ENCODE measurements at regions of chr1 and their contacts with region 1.

Region 1: DNA sequence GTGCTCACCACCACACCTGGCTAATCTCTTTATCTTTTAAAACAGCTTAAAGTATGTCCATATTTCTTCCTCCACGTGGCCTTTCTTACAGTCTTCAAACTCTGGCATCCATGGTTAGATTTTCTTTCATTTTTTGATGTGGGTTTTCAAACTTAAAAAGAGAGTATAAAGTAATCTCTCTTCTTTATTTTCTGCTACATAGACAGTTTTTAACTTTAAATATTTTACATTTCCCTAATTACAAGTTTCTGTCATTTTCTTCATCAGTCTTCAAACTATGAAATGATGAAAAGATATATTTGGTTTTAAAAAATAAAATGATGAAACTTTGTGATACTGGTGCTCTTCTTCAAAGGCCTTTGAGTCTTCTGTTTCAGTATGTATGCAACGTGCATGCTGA is 143.5 kb upstream of the ESRRG start:
- DNase-seq: no peak
- ATAC-seq: no peak
- H3K4me3 ChIP-seq: no peak overlapping the region
- H3K27ac ChIP-seq: no peak overlapping the region
- H3K4me1 ChIP-seq: no peaks in the 10 kb centered on the region
- H3K27me3 ChIP-seq: no peaks in the 10 kb centered on the region
- CTCF ChIP-seq: no peak
- POLR2A ChIP-seq: no peak
- RAD21 ChIP-seq: no peak

Region 2: DNA sequence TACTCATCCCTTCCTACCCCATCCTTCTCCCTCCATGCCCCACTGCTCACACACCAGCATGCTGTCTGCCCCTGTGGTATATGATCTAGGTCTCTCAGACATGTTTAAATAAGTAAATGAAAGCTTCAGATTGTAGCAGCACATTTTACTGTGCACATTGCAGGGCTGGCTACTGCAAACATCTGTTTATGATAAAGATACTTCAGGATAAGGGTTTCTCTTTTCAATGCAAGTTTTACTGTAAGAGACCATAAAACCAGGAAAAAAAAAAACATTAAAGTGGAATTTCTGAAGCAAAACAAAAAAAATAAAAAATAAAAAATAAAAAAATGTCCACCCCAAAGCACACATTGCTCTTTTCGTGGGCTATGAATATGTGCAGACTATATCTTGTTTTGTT is 627.9 kb before region 1 on chr1:
- CTCF ChIA-PET with region 1: no interaction called
- POLR2A ChIA-PET with region 1: interaction called, 10 read pairs
- dilution Hi-C with region 1: no loop called
- in situ Hi-C with region 1: no loop called
- intact Hi-C with region 1: no loop called
- DNase-seq: no peak
- ATAC-seq: no peak
- H3K4me3 ChIP-seq: no peak overlapping the region
- H3K27ac ChIP-seq: no peak overlapping the region
- H3K4me1 ChIP-seq: peaks cover 2% of the 10 kb centered on the region; the same call in 1 of the 2 replicates
- H3K27me3 ChIP-seq: no peaks in the 10 kb centered on the region
- CTCF ChIP-seq: no peak
- POLR2A ChIP-seq: no peak
- RAD21 ChIP-seq: no peak

Region 3: DNA sequence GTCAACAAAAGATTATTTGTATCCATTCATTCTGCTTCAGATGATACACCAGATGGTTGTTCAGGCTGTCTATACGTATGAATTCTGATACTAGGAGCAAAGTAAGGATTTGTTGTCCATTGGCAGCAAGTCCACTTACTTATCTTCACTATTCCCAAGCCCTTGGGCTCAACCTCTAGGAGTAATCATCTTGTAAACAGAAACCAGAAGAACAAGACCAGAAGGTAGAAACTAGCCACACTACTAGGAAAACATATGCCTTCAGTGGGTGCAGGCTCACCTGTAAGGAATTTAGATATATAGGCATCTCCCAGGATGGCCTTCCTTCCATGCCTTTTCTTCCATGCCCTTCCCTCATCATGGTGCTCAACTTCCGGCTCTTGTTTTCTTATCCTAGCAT is 99.6 kb after region 1 on chr1:
- CTCF ChIA-PET with region 1: no interaction called
- POLR2A ChIA-PET with region 1: no interaction called
- dilution Hi-C with region 1: no loop called
- in situ Hi-C with region 1: no loop called
- intact Hi-C with region 1: no loop called
- DNase-seq: no peak
- ATAC-seq: no peak
- H3K4me3 ChIP-seq: no peak overlapping the region
- H3K27ac ChIP-seq: no peak overlapping the region
- H3K4me1 ChIP-seq: no peaks in the 10 kb centered on the region
- H3K27me3 ChIP-seq: no peaks in the 10 kb centered on the region
- CTCF ChIP-seq: no peak
- POLR2A ChIP-seq: no peak
- RAD21 ChIP-seq: no peak